Activated CD4-positive, alpha-beta T cell treated with anti-CD3 and anti-CD28 coated beads for 36 hours (primary cell): ENCODE measurements at regions of chr14 and their contacts with region 1.

Region 1: DNA sequence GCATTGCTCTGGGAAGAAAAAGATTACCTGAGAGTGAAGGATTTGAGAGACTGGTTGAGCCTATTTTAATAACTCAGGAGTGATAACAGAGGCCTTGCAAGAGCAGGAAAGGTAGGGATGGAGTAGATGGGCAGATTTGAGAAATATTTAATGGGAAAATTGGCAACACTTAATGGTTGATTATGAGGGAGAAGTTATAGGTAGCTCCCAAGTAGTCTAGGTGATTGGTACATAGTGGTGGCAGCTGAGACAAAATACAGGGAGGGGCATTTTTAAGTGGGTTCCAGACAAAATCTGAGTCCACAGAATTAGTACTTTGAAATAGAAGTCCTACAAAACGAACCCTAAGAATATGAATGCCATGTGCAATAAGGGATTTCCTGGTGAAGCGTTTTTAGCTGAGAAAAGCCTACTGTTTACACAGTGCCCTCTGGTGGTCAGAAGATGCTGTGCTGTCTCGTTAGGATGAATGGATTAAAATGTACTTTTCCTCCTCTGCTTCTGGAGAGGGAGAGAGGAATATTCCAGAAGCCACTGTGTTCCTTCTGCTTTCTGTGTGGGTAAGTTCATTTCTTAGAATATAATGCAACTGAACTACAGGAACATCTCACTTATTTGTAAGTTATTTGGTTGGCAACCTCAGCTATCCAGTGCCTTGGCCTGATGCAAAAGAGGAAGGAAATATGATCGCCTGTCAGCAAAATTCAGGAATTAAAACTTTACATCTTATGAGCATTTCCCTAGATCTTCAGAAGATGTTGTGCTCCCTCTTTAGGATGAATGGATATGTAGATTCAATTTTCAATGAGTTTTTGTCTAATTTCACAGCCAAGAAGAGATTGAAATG is 6.5 kb downstream of the ZBTB1 start:
- DNase-seq: peak; percentile 76
- ATAC-seq: no peak
- H3K4me3 Mint-ChIP-seq: peak overlapping the region; percentile 24
- H3K27ac Mint-ChIP-seq: peak overlapping the region; percentile 85
- H3K4me1 Mint-ChIP-seq: peaks cover 73% of the 10 kb centered on the region
- H3K27me3 Mint-ChIP-seq: no peaks in the 10 kb centered on the region

Region 2: DNA sequence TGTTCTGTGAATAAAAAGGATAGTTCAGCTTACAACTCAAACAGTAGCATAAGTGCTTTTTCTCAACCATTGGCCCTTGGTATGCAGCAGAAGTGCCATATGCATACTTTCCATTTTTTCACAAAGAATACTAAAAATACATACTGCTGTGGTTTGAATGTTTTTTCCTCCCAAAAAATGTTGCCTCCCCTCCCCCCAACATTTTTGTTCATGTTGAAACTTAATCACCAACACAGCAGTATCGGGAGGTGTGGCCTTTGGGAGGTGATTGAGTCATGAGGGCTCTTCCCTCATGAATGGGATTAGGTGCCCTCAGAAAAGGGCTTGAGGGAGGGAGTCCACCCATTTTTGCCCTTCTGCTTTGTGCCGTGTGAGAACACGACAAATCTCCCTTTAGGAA is 415.4 kb before region 1 on chr14:
- CTCF ChIA-PET with region 1: no interaction called
- POLR2A ChIA-PET with region 1: no interaction called
- intact Hi-C with region 1: no loop called
- DNase-seq: peak; percentile 36
- ATAC-seq: no peak
- H3K4me3 Mint-ChIP-seq: no peak overlapping the region
- H3K27ac Mint-ChIP-seq: no peak overlapping the region
- H3K4me1 Mint-ChIP-seq: peaks cover 5% of the 10 kb centered on the region
- H3K27me3 Mint-ChIP-seq: no peaks in the 10 kb centered on the region

Region 3: DNA sequence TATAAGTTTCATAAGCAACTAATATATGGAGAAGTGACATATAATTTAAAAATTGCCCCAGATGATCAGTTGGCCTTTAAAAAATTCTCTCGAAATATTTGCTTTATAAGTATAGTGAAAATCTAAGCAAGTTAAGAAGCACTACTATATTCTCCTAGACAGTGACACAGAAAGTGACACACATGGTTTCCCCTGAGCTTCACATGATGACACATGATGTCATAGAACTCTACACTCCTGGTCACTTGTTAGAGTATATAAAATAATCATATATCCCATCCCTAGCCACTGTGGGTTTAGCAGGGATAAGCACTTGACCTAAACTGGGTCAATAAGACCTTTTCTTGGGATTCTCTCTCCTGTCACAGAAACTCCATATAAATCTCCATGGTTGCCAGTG is 165.5 kb before region 1 on chr14:
- CTCF ChIA-PET with region 1: interaction called, 20 read pairs
- POLR2A ChIA-PET with region 1: no interaction called
- intact Hi-C with region 1: loop called in 1 of 2 experiments (anchors 1 kb)
- DNase-seq: no peak
- ATAC-seq: no peak
- H3K4me3 Mint-ChIP-seq: no peak overlapping the region
- H3K27ac Mint-ChIP-seq: no peak overlapping the region
- H3K4me1 Mint-ChIP-seq: no peaks in the 10 kb centered on the region
- H3K27me3 Mint-ChIP-seq: no peaks in the 10 kb centered on the region

Region 4: GRCh38 chr14:64465191-64465822 is 45.7 kb before region 1 on chr14 and contains the start of gene AKAP5:
- CTCF ChIA-PET with region 1: interaction called, 6 read pairs
- POLR2A ChIA-PET with region 1: no interaction called
- intact Hi-C with region 1: loop called in 1 of 2 experiments (anchors 2 kb)
- DNase-seq: peak; percentile 70
- ATAC-seq: peak; percentile 79
- H3K4me3 Mint-ChIP-seq: peak within 1 kb of the TSS; percentile 74
- H3K27ac Mint-ChIP-seq: peak within 1 kb of the TSS; percentile 67
- H3K4me1 Mint-ChIP-seq: peaks cover 42% of the 10 kb centered on the region
- H3K27me3 Mint-ChIP-seq: no peaks in the 10 kb centered on the region
- total RNA-seq, gene AKAP5: 0.39 to 0.43 TPM

Region 5: GRCh38 chr14:64488590-64489099 is 22.4 kb before region 1 on chr14:
- CTCF ChIA-PET with region 1: interaction called, 12 read pairs
- POLR2A ChIA-PET with region 1: no interaction called
- intact Hi-C with region 1: no loop called
- DNase-seq: no peak
- ATAC-seq: no peak
- H3K4me3 Mint-ChIP-seq: no peak overlapping the region
- H3K27ac Mint-ChIP-seq: no peak overlapping the region
- H3K4me1 Mint-ChIP-seq: peaks cover 31% of the 10 kb centered on the region
- H3K27me3 Mint-ChIP-seq: no peaks in the 10 kb centered on the region

Region 6: DNA sequence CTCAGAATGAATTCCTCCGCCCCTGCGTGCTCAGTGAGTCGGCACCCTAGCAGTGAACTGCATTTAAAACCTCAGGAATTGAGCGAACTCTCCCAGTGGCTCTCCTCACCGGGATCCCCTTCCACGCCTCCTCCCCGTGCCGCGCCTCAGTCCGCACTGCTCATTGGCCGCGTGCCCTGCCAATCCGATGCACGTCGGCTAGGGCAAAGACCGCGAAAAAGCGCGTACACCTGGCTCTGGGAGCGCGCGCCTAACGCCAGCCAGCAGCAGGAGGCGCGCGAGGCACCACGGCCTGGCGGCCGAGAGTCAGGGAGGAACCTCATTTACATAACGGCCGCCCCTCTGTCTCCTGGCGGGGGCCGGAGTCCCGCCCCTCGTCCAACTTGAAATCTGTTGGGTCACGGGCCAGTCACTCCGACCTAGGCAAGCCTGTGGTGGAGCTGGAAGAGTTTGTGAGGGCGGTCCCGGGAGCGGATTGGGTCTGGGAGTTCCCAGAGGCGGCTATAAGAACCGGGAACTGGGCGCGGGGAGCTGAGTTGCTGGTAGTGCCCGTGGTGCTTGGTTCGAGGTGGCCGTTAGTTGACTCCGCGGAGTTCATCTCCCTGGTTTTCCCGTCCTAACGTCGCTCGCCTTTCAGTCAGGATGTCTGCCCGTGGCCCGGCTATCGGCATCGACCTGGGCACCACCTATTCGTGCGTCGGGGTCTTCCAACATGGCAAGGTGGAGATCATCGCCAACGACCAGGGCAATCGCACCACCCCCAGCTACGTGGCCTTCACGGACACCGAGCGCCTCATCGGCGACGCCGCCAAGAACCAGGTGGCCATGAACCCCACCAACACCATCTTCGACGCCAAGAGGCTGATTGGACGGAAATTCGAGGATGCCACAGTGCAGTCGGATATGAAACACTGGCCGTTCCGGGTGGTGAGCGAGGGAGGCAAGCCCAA is 29.4 kb after region 1 on chr14 and contains the start of gene HSPA2:
- CTCF ChIA-PET with region 1: interaction called, 13 read pairs
- POLR2A ChIA-PET with region 1: interaction called, 4 read pairs
- intact Hi-C with region 1: no loop called
- DNase-seq: peak; percentile 97
- ATAC-seq: peak; percentile 95
- H3K4me3 Mint-ChIP-seq: peak within 1 kb of the TSS; percentile 81
- H3K27ac Mint-ChIP-seq: peak within 1 kb of the TSS; percentile 96
- H3K4me1 Mint-ChIP-seq: peaks cover 28% of the 10 kb centered on the region
- H3K27me3 Mint-ChIP-seq: peaks cover 39% of the 10 kb centered on the region
- total RNA-seq, gene HSPA2: 3.2 to 4.1 TPM